ENCODE measurements at regions of chr22 and their contacts with region 1.

Region 1: DNA sequence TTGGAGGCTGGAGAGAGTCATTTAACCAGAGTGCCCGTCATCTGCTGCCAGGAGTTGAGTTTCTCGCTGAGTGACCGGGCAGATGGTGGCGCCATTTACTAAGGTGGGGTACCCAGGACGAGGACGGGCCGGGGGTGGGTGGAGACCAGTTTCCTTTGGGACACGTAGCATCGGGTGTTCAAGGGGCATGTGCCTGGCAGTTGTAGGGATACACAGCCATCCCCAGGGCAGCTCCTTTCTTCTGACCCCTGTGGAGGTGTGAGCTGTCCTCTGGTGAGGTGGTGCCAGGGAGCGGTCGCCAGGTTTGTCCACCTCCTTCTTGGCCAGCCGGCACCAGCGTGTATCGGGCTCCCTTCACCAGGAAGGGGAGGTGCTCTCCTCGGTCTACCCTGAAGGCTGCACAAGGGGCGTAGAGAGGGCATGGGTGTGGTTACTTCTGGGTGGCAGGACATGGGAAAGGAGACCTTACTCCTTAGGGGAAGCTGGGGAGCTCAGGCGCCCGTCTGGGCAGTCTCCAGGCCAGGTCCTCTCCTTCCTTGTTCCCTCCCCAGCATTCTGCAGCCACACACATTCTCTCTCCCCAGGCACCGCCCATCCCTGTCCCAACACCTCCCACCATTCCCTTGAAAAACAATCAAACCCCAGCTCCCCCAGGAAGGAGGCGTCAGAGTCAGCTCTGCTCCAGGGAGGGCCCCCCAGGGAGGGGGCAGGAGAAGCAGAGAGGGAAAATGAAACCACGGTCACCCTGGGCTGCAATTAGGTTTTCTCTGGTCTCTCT is 10.3 kb upstream of the MB start:
- DNase-seq: peak; percentile 83 to 90 (median 88)
- H3K4me3 ChIP-seq: peak overlapping the region; percentile 52
- H3K27ac ChIP-seq: peak overlapping the region; percentile 76 to 94
- H3K4me1 ChIP-seq: peaks cover 5% of the 10 kb centered on the region
- H3K27me3 ChIP-seq: no peaks in the 10 kb centered on the region
- CTCF ChIP-seq: peak; percentile 2 to 53 (median 49)
- EP300 ChIP-seq: peak; percentile 52
- POLR2A ChIP-seq: no peak

Region 2: DNA sequence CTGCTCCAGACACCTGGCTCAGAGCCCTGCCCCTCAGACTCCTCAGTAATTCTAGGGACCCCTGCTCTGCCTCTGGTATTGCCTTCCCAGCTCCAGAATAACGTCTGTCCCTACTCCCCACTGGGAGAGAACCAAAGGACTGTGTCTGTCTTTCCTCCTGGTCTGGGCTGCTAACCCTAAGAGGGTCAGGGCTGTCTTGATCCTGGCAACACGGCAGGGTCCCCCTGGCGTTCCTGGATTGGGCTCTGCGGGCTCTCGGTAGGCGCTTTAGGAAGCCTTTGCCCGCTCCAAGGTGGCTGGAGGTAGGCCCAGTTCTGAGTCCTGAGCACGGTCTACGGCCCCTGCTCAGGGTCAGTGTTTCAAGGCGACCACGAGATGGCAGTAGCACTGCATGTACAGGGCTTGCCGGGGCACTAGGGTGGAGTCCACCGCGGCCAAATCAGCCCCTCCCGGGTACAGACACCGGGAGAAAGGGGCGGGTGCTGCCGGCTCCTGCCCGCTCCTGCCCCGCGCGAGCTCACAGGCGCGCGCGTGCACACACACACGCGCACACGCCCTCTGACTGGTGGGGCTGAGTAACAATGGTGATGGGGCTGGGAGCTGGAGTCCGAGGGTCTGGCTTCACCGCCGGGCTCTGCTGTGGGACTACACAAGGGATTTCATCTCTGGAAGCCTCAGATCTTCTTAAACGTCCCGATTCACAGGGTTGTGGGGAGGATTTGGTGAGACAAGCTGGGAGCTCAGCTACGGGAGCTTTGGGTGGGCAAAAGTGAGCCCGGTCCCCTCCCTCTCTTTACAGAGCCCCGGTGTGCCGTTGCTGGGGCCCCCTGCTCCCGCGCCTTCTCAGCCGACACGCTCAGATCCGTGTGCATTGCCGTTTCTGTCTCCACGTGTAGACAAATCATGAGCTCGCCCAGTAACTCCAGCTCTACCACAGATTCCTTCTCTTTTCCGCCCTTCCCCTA is 276.6 kb before region 1 on chr22:
- intact Hi-C with region 1: loop called in 2 of 4 experiments (anchors 2 to 10 kb)
- DNase-seq: peak; percentile 95 to 97 (median 95)
- H3K4me3 ChIP-seq: peak overlapping the region; percentile 42
- H3K27ac ChIP-seq: peak overlapping the region; percentile 53 to 92
- H3K4me1 ChIP-seq: peaks cover 9% of the 10 kb centered on the region
- H3K27me3 ChIP-seq: no peaks in the 10 kb centered on the region
- CTCF ChIP-seq: peak; percentile 96 to 97 (median 96)
- EP300 ChIP-seq: no peak
- POLR2A ChIP-seq: peak; percentile 55

Region 3: DNA sequence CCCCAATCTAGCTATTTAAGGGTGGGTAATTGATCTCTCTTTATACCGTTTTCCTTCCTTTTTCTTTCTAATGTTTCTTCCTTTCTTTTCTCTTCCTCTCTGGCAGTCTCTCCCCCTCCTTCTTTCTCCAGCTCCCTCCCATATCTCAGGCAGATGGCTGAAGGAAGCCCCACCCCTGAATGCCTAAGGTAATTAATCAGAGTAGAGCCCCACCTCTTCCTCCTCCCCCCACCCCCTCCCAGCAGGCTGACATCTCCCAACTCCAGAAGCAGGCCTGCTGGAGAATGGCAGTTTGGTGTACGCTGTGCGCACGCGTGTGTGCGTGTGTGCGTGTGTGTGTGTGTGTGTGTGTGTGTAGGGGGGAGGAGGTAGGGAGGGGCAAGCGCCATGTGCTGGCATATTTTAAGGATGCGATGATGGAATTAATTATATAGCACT is 212.9 kb after region 1 on chr22:
- intact Hi-C with region 1: loop called (anchors 5 to 10 kb)
- DNase-seq: peak; percentile 86 to 89 (median 87)
- H3K4me3 ChIP-seq: peak overlapping the region; percentile 49
- H3K27ac ChIP-seq: peak overlapping the region in 1 of 2 donors; percentile 76
- H3K4me1 ChIP-seq: peaks cover 4% of the 10 kb centered on the region
- H3K27me3 ChIP-seq: no peaks in the 10 kb centered on the region
- CTCF ChIP-seq: no peak
- EP300 ChIP-seq: no peak
- POLR2A ChIP-seq: peak; percentile 9

Region 4: GRCh38 chr22:35921777-35922176 is 294.3 kb after region 1 on chr22:
- intact Hi-C with region 1: loop called (anchors 2 to 10 kb)
- DNase-seq: peak in 3 of 5 donors; percentile 51 to 81 (median 51)
- H3K4me3 ChIP-seq: no peak overlapping the region
- H3K27ac ChIP-seq: peak overlapping the region in 1 of 2 donors; percentile 32
- H3K4me1 ChIP-seq: peaks cover 27% of the 10 kb centered on the region
- H3K27me3 ChIP-seq: no peaks in the 10 kb centered on the region
- CTCF ChIP-seq: peak in 2 of 3 donors; percentile 45 to 50
- EP300 ChIP-seq: no peak
- POLR2A ChIP-seq: no peak

Region 5: DNA sequence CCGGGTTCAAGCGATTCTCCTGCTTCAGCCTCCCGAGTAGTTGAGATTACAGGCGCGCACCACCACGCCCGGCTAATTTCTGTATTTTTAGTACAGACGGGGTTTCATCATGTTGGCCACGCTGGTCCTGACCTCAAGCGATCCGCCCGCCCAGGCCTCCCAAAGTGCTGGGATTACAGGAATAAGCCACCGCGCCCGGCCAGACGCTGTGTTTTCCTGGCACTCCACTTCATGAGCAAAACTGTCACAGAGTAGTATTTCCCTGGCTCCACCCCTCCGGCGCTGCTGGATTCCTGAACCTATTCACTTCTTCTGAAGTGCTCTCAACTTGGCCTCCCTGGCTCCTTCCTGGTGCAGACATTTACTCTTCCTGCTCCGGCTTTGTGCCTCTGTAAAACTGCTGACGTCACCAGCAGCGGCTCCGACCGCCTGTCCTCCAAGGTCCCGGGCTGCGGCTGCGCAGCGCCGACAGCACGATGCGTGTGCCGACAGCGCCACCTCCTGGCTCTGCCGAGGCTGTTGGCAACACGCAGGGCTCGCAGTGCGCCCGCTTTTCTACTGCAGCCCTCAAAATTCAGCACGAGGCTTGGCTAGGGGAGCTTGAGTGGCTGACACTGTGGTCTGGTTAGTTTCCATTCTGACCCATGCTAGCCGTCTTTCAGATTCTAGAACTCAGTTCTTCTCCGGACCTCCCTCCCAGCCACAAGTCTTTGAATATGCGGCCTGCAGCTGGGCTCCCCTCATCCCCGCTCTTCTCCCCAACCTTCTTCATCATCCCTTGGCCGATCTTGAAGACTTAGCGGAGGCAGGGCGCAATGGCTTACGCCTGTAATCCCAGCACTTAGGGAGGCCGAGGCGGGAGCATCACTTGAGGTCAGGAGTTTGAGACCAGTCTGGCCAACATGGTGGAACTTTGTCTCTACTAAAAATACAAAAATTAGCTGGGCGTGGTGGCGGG is 496.5 kb after region 1 on chr22:
- intact Hi-C with region 1: loop called (anchors 2 to 10 kb)
- DNase-seq: peak; percentile 94 to 97 (median 95)
- H3K4me3 ChIP-seq: peak overlapping the region; percentile 33
- H3K27ac ChIP-seq: peak overlapping the region; percentile 33 to 79
- H3K4me1 ChIP-seq: no peaks in the 10 kb centered on the region
- H3K27me3 ChIP-seq: no peaks in the 10 kb centered on the region
- CTCF ChIP-seq: peak; percentile 94 to 99 (median 98)
- EP300 ChIP-seq: peak; percentile 55
- POLR2A ChIP-seq: peak; percentile 5

Measured in ovary (tissue), 10 donors.